ENCODE measurements at regions of chr7 and their contacts with region 1.

Region 1: GRCh38 chr7:148940702-148941597 is 56.9 kb upstream of the EZH2 start:
- DNase-seq: peak; percentile 32 to 83 (median 53)
- ATAC-seq: peak; percentile 72 to 83 (median 79)
- H3K4me3 ChIP-seq: peak overlapping the region; percentile 88 to 97
- H3K4me3 Mint-ChIP-seq: peak overlapping the region; percentile 94 to 97 (median 95)
- H3K27ac ChIP-seq: peak overlapping the region; percentile 77
- H3K27ac Mint-ChIP-seq: peak overlapping the region; percentile 97 to 99
- H3K4me1 ChIP-seq: peaks cover 3 to 12% of the 10 kb centered on the region in 2 experiments
- H3K4me1 Mint-ChIP-seq: peaks cover 18 to 21% (median 18%) of the 10 kb centered on the region in 3 donors
- H3K27me3 ChIP-seq: no peaks in the 10 kb centered on the region
- H3K27me3 Mint-ChIP-seq: no peaks in the 10 kb centered on the region

Region 2: GRCh38 chr7:148856891-148857290 is 84.1 kb before region 1 on chr7:
- CTCF ChIA-PET with region 1: interaction called, 4 to 12 read pairs
- POLR2A ChIA-PET with region 1: interaction called in 1 of 2 experiments, 4 read pairs
- DNase-seq: peak in 1 of 35 experiments; percentile 15
- ATAC-seq: no peak
- H3K4me3 ChIP-seq: no peak overlapping the region
- H3K4me3 Mint-ChIP-seq: no peak overlapping the region
- H3K27ac ChIP-seq: no peak overlapping the region
- H3K27ac Mint-ChIP-seq: no peak overlapping the region
- H3K4me1 ChIP-seq: peaks cover 0 to 3% of the 10 kb centered on the region in 2 experiments
- H3K4me1 Mint-ChIP-seq: peaks cover 10 to 21% (median 11%) of the 10 kb centered on the region in 3 donors
- H3K27me3 ChIP-seq: no peaks in the 10 kb centered on the region
- H3K27me3 Mint-ChIP-seq: no peaks in the 10 kb centered on the region

Region 3: GRCh38 chr7:148884299-148885022 is 56.5 kb before region 1 on chr7:
- CTCF ChIA-PET with region 1: interaction called in 1 of 2 experiments, 10 read pairs
- POLR2A ChIA-PET with region 1: interaction called in 1 of 2 experiments, 8 read pairs
- DNase-seq: peak; percentile 83 to 96 (median 91)
- ATAC-seq: peak; percentile 89 to 95 (median 92)
- H3K4me3 ChIP-seq: peak overlapping the region; percentile 68 to 83
- H3K4me3 Mint-ChIP-seq: peak overlapping the region; percentile 86 to 95 (median 88)
- H3K27ac ChIP-seq: peak overlapping the region; percentile 69
- H3K27ac Mint-ChIP-seq: peak overlapping the region; percentile 86 to 89
- H3K4me1 ChIP-seq: peaks cover 9 to 13% of the 10 kb centered on the region in 2 experiments
- H3K4me1 Mint-ChIP-seq: peaks cover 16 to 35% (median 22%) of the 10 kb centered on the region in 3 donors
- H3K27me3 ChIP-seq: peaks cover 0 to 4% of the 10 kb centered on the region in 2 experiments
- H3K27me3 Mint-ChIP-seq: no peaks in the 10 kb centered on the region

Region 4: DNA sequence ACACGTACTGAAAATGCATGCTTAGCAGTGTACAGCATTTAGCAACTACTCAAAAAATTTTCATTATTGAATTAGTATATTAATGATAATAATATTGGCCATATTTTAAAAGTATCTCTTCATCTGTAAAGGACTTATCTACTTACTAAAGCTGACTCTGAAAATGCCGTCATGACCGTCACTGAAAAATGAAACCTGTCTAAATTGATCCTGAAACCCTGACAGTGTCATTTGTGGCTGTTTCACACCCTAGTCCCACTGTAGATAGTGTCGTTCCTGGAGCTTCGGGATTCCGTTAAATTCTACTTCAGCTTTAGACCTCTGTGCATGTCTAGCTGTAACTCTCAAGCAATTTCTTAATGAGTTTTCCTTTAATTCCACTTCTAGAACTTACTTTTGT is 21.1 kb before region 1 on chr7:
- CTCF ChIA-PET with region 1: interaction called in 1 of 2 experiments, 3 read pairs
- POLR2A ChIA-PET with region 1: interaction called in 1 of 2 experiments, 10 read pairs
- DNase-seq: no peak
- ATAC-seq: no peak
- H3K4me3 ChIP-seq: no peak overlapping the region
- H3K4me3 Mint-ChIP-seq: no peak overlapping the region
- H3K27ac ChIP-seq: no peak overlapping the region
- H3K27ac Mint-ChIP-seq: no peak overlapping the region
- H3K4me1 ChIP-seq: peaks cover 15% of the 10 kb centered on the region in 2 experiments
- H3K4me1 Mint-ChIP-seq: peaks cover 34 to 37% (median 37%) of the 10 kb centered on the region in 3 donors
- H3K27me3 ChIP-seq: no peaks in the 10 kb centered on the region
- H3K27me3 Mint-ChIP-seq: no peaks in the 10 kb centered on the region

Measured in T-cell (primary cell).